SK-N-SH (cell line): ENCODE measurements at regions of chr6 and their contacts with region 1.

Region 1: GRCh38 chr6:75353644-75354043 is 69.1 kb upstream of the TMEM30A start:
- DNase-seq: no peak
- H3K4me3 ChIP-seq: no peak overlapping the region
- H3K27ac ChIP-seq: no peak overlapping the region
- H3K4me1 ChIP-seq: peaks cover 4 to 11% of the 10 kb centered on the region in 2 experiments; a peak in 3 of 4 replicates
- H3K27me3 ChIP-seq: no peaks in the 10 kb centered on the region
- CTCF ChIP-seq: no peak
- EP300 ChIP-seq: no peak
- RAD21 ChIP-seq: no peak

Region 2: GRCh38 chr6:75368151-75368779 is 14.6 kb after region 1 on chr6:
- CTCF ChIA-PET with region 1: interaction called, 11 read pairs
- POLR2A ChIA-PET with region 1: no interaction called
- DNase-seq: peak; percentile 12
- H3K4me3 ChIP-seq: no peak overlapping the region
- H3K27ac ChIP-seq: no peak overlapping the region
- H3K4me1 ChIP-seq: no peaks in the 10 kb centered on the region
- H3K27me3 ChIP-seq: no peaks in the 10 kb centered on the region
- CTCF ChIP-seq: peak; percentile 56
- EP300 ChIP-seq: no peak
- RAD21 ChIP-seq: peak; percentile 76